ENCODE measurements at regions of chr13 and their contacts with region 1.

Region 1: GRCh38 chr13:97432917-97433726 is 847 bp upstream of the RAP2A start:
- DNase-seq: peak; percentile 85
- CTCF ChIP-seq: no peak

Region 2: DNA sequence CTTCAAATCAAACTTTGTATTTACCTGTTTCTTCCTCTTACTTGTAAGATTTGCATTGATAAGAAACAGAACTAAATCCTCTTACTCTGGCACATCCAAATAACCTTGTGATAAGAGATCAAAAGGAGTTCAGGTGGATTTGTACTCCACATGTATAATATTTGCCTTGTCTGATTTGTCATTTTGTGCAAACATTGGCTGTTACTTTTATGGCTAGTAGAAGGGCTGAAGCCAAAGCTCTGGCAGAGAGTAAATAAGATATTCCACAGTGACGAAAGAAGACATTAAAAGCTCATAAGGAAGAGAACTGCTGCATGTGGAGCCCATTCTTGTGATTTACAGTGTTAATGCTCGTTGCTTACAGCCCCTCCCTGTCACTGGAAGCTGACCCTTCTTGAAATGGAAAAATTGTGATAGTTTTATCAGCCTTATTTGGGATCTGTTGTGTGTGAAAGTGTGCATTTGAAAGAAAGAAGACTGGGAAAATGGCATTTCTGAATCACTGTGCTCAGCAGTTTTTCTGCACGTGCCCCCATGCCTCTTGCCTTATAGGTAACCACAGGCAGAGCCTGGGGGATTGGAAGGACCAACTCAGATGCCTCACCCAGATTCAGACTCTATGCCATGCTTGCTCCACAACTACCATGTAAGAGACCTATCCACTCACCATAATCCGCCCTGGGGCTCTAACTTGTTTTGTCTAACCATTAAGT is 507.1 kb before region 1 on chr13:
- CTCF ChIA-PET with region 1: no interaction called
- POLR2A ChIA-PET with region 1: no interaction called
- DNase-seq: no peak
- CTCF ChIP-seq: no peak

Region 3: DNA sequence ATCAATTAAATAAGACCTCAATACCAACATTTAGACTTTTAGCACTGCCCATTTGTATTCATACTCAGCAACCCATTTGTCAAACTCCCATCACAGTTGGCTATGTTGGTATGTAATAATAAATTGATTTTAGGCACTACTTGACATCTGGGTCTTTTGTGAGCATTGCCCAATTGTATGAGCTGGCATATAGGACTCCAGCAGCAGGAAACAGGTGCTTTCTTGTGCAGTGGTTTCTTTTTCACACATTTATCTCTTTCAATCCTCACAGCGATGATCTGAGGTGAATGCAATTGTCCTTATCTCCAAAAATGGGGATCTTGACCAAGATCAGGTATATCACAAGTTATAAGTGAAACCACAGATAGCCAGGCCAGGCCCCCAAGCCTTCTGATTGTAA is 341.9 kb before region 1 on chr13:
- CTCF ChIA-PET with region 1: no interaction called
- POLR2A ChIA-PET with region 1: interaction called, 11 read pairs
- DNase-seq: no peak
- CTCF ChIP-seq: no peak

Region 4: GRCh38 chr13:97133959-97134358 is 299.2 kb before region 1 on chr13:
- CTCF ChIA-PET with region 1: no interaction called
- POLR2A ChIA-PET with region 1: no interaction called
- DNase-seq: no peak
- CTCF ChIP-seq: no peak

Region 5: DNA sequence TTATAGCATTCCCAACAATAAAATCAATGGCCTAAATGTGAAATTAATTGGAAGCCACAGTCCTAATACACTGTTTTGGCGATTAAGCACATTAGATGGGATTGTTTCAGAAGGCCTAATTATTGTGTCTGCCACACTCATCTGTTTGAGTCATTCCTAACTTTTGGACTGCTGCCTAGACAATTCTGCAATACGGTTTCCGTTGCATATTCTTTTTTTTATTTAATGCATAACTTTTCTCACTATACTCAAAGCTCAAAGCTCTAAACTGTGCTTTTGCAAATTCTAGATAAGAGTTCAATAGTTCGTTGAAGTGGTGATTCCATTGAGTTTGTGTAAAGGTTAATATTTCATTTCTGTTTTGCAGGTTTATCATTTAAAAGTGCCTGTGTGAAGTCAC is 157.9 kb before region 1 on chr13:
- CTCF ChIA-PET with region 1: no interaction called
- POLR2A ChIA-PET with region 1: no interaction called
- DNase-seq: no peak
- CTCF ChIP-seq: no peak

Region 6: GRCh38 chr13:97448503-97449230 is 15.5 kb after region 1 on chr13:
- CTCF ChIA-PET with region 1: interaction called, 11 read pairs
- POLR2A ChIA-PET with region 1: interaction called, 6 read pairs
- DNase-seq: no peak
- CTCF ChIP-seq: no peak

Region 7: DNA sequence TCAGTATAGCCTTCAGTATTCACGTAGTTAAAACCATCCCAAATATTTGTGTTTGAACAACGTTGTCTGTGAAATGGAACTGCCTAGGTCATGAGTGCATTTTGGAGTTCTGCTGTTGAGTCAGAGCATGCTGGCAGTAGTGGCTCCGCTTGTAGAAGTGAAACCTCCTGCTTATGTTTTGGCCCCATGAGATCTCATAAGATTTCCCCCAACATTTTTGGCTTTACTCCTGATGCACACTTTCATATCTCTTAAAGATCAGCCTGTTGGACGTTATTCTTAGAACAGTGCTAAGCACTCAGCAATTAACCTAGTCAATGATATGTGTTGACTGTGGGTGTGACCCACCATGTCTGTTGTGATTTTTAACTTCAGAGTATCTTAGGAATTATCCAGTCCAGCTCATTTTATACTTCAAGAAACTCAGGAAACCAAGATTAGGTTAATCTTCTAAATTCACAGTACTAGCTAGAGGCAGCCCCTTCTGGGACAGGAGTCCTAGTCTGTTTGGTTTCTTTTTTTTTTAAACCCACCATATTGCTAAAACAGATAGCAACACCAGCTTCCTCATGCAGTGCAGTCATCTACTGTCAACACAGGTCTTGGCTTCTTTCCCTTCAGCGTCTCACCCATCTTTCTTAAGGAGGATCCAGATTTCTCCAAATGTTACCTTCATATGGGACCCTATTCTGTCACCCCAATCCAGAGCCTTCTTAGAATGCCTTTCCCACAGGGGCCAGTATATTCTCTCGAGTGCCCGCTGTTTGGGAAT is 27.1 kb after region 1 on chr13:
- CTCF ChIA-PET with region 1: interaction called, 15 read pairs
- POLR2A ChIA-PET with region 1: interaction called, 4 read pairs
- DNase-seq: peak; percentile 55
- CTCF ChIP-seq: no peak

Measured in GM10248 (cell line).